Naive thymus-derived CD4-positive, alpha-beta T cell (primary cell): ENCODE measurements at regions of chr7 and their contacts with region 1.

Region 1: DNA sequence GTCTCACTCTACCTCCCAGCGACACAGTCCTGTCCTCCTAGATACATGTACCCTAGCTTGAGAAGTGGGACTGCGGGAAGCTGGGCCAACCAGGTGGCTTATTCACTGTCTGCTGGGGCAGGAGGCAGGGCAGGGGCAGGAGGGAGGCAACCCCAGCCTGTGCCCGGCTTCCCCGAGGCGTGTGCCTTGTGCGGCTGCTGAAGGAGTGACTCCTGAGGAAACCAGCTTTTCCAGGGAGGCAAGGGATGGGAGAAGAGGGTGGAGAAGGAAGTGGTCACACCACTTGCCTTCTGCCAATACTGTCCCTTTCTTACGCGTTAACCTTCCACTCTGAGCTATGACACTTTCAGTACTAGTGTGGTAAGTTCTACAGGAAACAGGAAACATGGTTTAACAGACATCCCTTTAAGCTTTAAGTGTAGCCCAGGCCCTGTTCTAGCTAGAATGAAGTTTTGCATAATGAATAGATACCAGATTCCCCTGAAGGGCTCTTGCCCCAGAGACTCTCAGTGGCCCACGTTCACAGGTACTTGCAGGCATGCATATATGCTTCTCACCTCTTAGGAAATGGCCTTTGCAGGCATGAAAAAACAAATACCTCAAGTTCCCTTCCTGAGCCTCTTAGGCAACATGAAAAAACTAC is 40.6 kb downstream of the SYPL1 start:
- DNase-seq: peak in 8 of 9 donors; percentile 50 to 75 (median 66)
- ATAC-seq: peak; percentile 97
- H3K4me3 ChIP-seq: peak overlapping the region; percentile 70
- H3K4me3 Mint-ChIP-seq: peak overlapping the region; percentile 74 to 84 (median 79)
- H3K27ac ChIP-seq: peak overlapping the region; percentile 80
- H3K27ac Mint-ChIP-seq: peak overlapping the region; percentile 93 to 99 (median 97)
- H3K4me1 ChIP-seq: peaks cover 26 to 49% of the 10 kb centered on the region in 2 donors
- H3K4me1 Mint-ChIP-seq: peaks cover 38 to 75% (median 64%) of the 10 kb centered on the region in 7 donors
- H3K27me3 ChIP-seq: no peaks in the 10 kb centered on the region
- H3K27me3 Mint-ChIP-seq: no peaks in the 10 kb centered on the region

Region 2: GRCh38 chr7:106056513-106057203 is 14.8 kb before region 1 on chr7:
- CTCF ChIA-PET with region 1: interaction called, 14 read pairs
- POLR2A ChIA-PET with region 1: interaction called, 10 read pairs
- intact Hi-C with region 1: loop called (anchors 1 kb)
- DNase-seq: peak; percentile 42 to 76 (median 68)
- ATAC-seq: peak; percentile 97
- H3K4me3 ChIP-seq: no peak overlapping the region
- H3K4me3 Mint-ChIP-seq: peak overlapping the region in 3 of 10 donors; percentile 38 to 66 (median 49)
- H3K27ac ChIP-seq: no peak overlapping the region
- H3K27ac Mint-ChIP-seq: peak overlapping the region in 5 of 9 donors; percentile 6 to 56 (median 28)
- H3K4me1 ChIP-seq: peaks cover 0 to 12% of the 10 kb centered on the region in 2 donors
- H3K4me1 Mint-ChIP-seq: peaks cover 10 to 30% (median 19%) of the 10 kb centered on the region in 7 donors
- H3K27me3 ChIP-seq: no peaks in the 10 kb centered on the region
- H3K27me3 Mint-ChIP-seq: peaks cover 0 to 18% (median 0%) of the 10 kb centered on the region in 5 donors

Region 3: GRCh38 chr7:106094800-106095199 is 23.3 kb after region 1 on chr7:
- CTCF ChIA-PET with region 1: interaction called, 4 read pairs
- POLR2A ChIA-PET with region 1: interaction called, 19 read pairs
- intact Hi-C with region 1: no loop called
- DNase-seq: no peak
- ATAC-seq: no peak
- H3K4me3 ChIP-seq: no peak overlapping the region
- H3K4me3 Mint-ChIP-seq: no peak overlapping the region
- H3K27ac ChIP-seq: no peak overlapping the region
- H3K27ac Mint-ChIP-seq: peak overlapping the region in 2 of 9 donors; percentile 15 to 68
- H3K4me1 ChIP-seq: no peaks in the 10 kb centered on the region
- H3K4me1 Mint-ChIP-seq: peaks cover 4 to 19% (median 11%) of the 10 kb centered on the region in 7 donors
- H3K27me3 ChIP-seq: no peaks in the 10 kb centered on the region
- H3K27me3 Mint-ChIP-seq: no peaks in the 10 kb centered on the region

Region 4: DNA sequence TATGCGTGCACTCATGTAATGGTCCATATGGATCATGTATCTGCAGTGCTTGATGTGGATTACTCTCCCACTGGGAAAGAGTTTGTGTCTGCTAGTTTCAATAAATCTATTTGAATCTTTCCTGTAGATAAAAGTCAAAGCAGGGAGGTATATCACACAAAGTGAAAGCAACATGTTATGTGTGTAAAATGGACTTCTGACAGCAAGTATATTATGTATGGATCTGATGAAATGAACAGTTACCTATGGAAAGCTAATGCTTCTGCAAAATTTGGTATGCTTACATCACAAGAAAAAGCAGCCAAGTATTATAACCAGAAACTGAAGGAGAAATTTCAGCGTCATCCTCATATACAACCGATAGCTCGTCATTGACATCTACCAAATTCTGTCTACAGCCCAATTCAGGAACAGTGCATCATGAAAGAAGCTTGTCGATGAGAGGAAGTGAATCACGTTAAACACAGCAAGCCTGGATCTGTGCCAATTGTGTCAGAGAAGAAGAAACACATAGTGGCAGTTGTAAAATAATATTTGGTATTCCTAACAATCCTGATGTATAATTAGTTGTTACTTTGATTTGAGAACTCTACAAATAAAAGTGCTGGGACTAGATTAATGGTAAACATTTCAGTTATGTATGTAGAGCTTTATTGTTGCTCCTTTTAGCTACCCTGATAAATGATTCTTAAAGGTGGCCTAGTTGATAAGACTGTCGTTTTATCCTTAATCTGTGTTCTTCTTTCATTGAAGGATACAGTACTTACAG is 54.9 kb after region 1 on chr7:
- CTCF ChIA-PET with region 1: interaction called, 5 read pairs
- POLR2A ChIA-PET with region 1: interaction called, 11 read pairs
- intact Hi-C with region 1: loop called in 1 of 2 experiments (anchors 1 kb)
- DNase-seq: peak in 7 of 9 donors; percentile 49 to 76 (median 70)
- ATAC-seq: peak; percentile 89
- H3K4me3 ChIP-seq: peak overlapping the region; percentile 23
- H3K4me3 Mint-ChIP-seq: peak overlapping the region; percentile 9 to 84 (median 78)
- H3K27ac ChIP-seq: no peak overlapping the region
- H3K27ac Mint-ChIP-seq: peak overlapping the region in 8 of 9 donors; percentile 11 to 74 (median 38)
- H3K4me1 ChIP-seq: peaks cover 0 to 8% of the 10 kb centered on the region in 2 donors
- H3K4me1 Mint-ChIP-seq: peaks cover 13 to 34% (median 23%) of the 10 kb centered on the region in 7 donors
- H3K27me3 ChIP-seq: peaks cover 0 to 2% of the 10 kb centered on the region in 2 donors
- H3K27me3 Mint-ChIP-seq: peaks cover 0 to 19% (median 0%) of the 10 kb centered on the region in 5 donors

Region 5: GRCh38 chr7:106153891-106154449 is 82.5 kb after region 1 on chr7:
- CTCF ChIA-PET with region 1: interaction called, 33 read pairs
- POLR2A ChIA-PET with region 1: interaction called, 6 read pairs
- intact Hi-C with region 1: loop called in 1 of 2 experiments (anchors 1 kb)
- DNase-seq: peak; percentile 51 to 76 (median 66)
- ATAC-seq: peak; percentile 95
- H3K4me3 ChIP-seq: no peak overlapping the region
- H3K4me3 Mint-ChIP-seq: peak overlapping the region in 8 of 10 donors; percentile 7 to 76 (median 58)
- H3K27ac ChIP-seq: no peak overlapping the region
- H3K27ac Mint-ChIP-seq: peak overlapping the region in 1 of 9 donors; percentile 82
- H3K4me1 ChIP-seq: peaks cover 0 to 8% of the 10 kb centered on the region in 2 donors
- H3K4me1 Mint-ChIP-seq: peaks cover 0 to 13% (median 8%) of the 10 kb centered on the region in 7 donors
- H3K27me3 ChIP-seq: peaks cover 0 to 4% of the 10 kb centered on the region in 2 donors
- H3K27me3 Mint-ChIP-seq: peaks cover 0 to 33% (median 22%) of the 10 kb centered on the region in 5 donors

Region 6: DNA sequence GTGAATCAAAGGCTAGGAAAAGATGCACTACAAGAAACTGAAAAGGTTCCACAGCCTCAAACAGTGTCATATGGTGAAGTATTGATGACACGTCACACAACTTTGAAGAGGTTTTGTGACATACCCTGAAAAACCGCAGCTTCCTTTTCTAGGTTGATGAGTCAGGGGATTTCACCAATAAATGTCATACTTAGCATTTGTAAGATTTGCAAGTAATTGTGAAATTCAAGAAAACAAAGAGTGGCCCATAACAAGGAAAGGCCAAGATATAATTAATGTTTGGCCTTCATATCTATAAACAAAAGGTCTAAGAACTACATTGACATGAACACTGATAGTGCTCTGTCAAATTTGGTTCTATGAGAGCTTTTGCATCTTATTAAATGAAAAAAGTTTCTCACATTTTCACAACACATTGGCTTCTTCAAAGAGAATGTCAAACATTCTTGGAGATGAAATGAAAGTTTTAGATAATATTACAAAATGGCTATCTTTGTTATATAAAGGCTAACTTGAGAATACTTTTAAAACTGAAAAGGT is 275.3 kb after region 1 on chr7:
- CTCF ChIA-PET with region 1: no interaction called
- POLR2A ChIA-PET with region 1: no interaction called
- intact Hi-C with region 1: loop called in 1 of 2 experiments (anchors 2 kb)
- DNase-seq: peak in 8 of 9 donors; percentile 28 to 61 (median 50)
- ATAC-seq: peak; percentile 78
- H3K4me3 ChIP-seq: no peak overlapping the region
- H3K4me3 Mint-ChIP-seq: peak overlapping the region in 1 of 10 donors; percentile 47
- H3K27ac ChIP-seq: no peak overlapping the region
- H3K27ac Mint-ChIP-seq: peak overlapping the region in 2 of 9 donors; percentile 19 to 94
- H3K4me1 ChIP-seq: peaks cover 6 to 19% of the 10 kb centered on the region in 2 donors
- H3K4me1 Mint-ChIP-seq: peaks cover 5 to 35% (median 13%) of the 10 kb centered on the region in 7 donors
- H3K27me3 ChIP-seq: no peaks in the 10 kb centered on the region
- H3K27me3 Mint-ChIP-seq: peaks cover 1 to 61% (median 31%) of the 10 kb centered on the region in 5 donors